ENCODE measurements at regions of chr3 and their contacts with region 1.

Region 1: GRCh38 chr3:98039322-98040024 is 4.4 kb upstream of the GABRR3 start:
- DNase-seq: peak; percentile 45
- CTCF ChIP-seq: peak; percentile 82

Region 2: GRCh38 chr3:97102641-97103040 is 936.8 kb before region 1 on chr3:
- in situ Hi-C with region 1: no loop called
- DNase-seq: no peak
- CTCF ChIP-seq: no peak

Region 3: DNA sequence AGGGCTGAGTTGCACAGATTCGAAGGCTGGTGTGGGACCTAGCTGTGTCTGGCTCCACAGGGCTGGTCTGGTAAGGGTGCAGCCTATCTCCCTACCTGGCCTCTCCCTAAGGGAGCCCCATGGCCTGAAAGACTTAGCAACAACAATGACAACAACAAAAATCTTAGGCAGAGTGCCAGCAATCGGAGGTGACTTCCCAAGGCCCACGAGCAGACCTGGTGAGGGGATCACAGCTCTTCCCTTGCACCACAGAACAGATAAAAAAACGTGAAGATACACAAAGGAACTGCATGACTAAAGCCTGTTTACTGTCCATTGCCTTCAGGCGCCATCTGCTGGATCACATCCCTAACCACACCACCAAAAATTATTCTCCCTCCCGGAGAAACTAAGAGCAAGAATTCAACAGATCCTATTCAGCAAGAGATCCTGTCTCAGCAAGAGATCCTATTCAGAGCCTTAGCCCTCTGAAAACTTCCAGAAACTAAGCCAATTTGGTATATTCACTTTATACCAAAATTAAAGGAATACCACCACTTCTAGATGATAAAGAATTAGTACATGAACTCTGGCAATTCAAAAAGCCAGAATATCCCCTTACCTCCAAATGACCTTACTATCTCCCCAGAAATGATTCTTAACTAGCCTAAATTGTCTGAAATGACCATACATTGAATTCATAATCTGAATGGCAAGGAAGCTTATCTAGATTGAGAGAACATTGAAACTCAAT is 290.1 kb after region 1 on chr3:
- in situ Hi-C with region 1: loop called (anchors 10 kb)
- DNase-seq: peak; percentile 29
- CTCF ChIP-seq: peak; percentile 75

Region 4: DNA sequence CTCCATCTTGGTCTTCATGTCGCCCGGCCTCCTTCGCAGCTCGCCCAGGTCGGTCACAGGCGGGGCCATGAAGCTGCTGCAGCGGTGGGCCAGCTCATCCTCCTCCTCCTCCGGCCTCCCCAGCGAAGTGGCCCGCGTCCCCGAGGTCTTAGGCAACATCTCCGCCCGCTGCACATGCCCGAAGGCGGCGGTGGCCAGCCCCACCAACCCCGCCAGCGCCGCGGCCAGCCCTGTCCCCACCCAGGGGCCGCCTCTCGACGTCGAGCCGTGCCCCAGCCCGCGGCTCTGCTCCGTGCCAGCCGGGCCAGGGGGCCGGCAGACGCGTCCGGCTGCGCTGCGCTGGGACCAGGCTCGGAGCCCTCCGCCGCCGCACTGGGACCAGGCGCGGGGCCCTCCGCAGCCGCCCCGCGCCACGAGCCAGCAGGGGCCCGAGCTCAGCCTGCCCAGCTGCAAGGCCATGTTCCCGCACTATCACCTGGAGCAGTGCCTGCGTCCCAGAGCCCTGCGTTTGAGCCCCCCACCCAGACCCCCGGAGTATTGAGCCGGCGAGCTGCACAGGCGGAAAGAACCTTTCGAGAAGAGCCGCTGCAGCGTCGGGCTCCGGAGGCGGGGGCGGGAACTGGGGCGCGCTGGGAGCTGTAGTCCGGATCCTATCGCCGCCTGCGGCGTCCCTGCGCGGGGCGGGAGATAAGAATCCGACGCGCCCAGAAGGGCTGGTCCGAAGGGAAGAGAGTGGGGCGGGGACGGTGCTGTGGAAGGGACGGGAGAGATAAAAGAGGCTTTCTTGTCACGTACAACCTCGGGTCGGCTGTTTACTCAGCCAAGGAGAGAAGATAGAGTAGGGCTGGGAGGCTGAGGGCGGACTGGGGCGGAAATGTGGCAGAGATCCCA is 553.8 kb after region 1 on chr3 and contains the start of gene CPOX:
- in situ Hi-C with region 1: loop called (anchors 25 kb)
- DNase-seq: peak; percentile 92
- CTCF ChIP-seq: no peak

Region 5: GRCh38 chr3:98994128-98994762 is 954.8 kb after region 1 on chr3:
- in situ Hi-C with region 1: loop called (anchors 25 kb)
- DNase-seq: no peak
- CTCF ChIP-seq: peak; percentile 23

Measured in GM13977 (cell line).